Caco-2 (cell line): ENCODE measurements at regions of chr5 and their contacts with region 1.

Region 1: DNA sequence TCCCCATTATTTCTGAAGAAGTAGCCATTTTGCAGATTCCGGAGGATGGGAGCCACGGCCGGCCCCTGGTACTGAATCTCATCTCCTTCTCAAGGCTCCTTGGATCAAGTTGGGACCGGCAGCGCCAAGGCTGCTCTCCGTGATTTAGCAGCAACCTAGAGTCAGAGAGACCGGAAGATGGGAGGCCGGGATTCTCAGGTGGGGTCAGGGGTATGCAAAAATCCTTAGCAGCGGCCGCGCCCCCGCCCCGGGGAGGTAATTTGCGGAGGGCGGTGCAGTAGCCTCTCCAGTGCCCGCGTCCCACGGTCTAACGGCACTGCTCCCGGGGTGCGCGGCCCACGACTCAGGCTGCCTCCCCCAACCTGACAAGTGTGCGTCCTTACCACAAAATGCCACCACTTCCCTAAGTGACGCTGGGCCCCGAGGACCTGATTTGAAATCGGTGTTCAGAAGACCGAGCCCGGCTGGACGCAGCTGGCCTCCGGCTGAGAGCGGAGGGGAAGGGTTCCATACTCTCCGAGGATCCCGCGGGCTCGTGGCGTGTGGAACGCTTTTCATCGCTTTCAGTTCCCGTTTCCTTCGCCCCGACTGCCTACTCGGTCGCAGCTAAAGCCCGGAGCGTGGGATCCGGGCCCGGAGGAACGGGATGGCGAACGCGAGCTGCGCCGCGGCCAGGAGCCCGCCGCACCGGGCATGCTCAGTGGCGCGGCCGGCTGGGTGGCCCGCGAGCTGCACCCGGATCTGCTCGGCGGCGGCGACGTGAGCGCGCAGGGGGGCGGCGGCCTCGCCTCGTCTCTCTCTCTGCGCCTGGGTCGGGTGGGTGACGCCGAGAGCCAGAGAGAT is at the start of gene SCAMP1:
- DNase-seq: peak; percentile 90 to 97
- H3K4me3 ChIP-seq: peak within 1 kb of the TSS; percentile 72
- H3K4me3 Mint-ChIP-seq: peak within 1 kb of the TSS; percentile 97
- H3K27ac Mint-ChIP-seq: peak within 1 kb of the TSS; percentile 95
- H3K4me1 ChIP-seq: 0 out of 2 replicates have a peak, but pooled peaks cover 10% of the 10 kb centered on the region
- H3K4me1 Mint-ChIP-seq: peaks cover 6% of the 10 kb centered on the region
- H3K27me3 ChIP-seq: no peaks in the 10 kb centered on the region
- H3K27me3 Mint-ChIP-seq: no peaks in the 10 kb centered on the region
- CTCF ChIP-seq: peak in 1 of 2 experiments; percentile 15
- total RNA-seq, gene SCAMP1: 21.3 and 23.6 TPM in 2 replicates

Region 2: DNA sequence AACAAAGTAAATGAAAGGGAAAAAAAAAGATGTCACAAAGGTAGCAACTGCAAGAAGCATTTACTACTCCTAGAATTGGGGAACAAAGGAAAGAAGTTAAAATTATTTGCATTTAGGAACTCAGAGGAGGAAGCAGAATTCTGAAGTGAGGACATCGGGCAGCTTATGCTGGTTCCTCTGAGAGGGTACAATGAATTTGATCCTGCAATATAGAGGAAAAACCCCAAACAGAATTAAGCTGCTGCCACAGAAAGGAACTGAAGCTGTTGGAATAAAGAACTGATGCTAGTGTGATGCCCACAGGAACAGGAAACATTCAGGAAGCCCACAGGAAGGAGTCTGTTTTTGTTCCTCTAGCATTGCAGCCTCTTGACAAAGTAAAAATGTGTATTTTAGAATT is 561.6 kb before region 1 on chr5:
- CTCF ChIA-PET with region 1: no interaction called
- POLR2A ChIA-PET with region 1: no interaction called
- intact Hi-C with region 1: no loop called
- DNase-seq: no peak
- H3K4me3 ChIP-seq: no peak overlapping the region
- H3K4me3 Mint-ChIP-seq: no peak overlapping the region
- H3K27ac Mint-ChIP-seq: no peak overlapping the region
- H3K4me1 ChIP-seq: no peaks in the 10 kb centered on the region
- H3K4me1 Mint-ChIP-seq: no peaks in the 10 kb centered on the region
- H3K27me3 ChIP-seq: no peaks in the 10 kb centered on the region
- H3K27me3 Mint-ChIP-seq: peaks cover 6% of the 10 kb centered on the region
- CTCF ChIP-seq: no peak

Region 3: DNA sequence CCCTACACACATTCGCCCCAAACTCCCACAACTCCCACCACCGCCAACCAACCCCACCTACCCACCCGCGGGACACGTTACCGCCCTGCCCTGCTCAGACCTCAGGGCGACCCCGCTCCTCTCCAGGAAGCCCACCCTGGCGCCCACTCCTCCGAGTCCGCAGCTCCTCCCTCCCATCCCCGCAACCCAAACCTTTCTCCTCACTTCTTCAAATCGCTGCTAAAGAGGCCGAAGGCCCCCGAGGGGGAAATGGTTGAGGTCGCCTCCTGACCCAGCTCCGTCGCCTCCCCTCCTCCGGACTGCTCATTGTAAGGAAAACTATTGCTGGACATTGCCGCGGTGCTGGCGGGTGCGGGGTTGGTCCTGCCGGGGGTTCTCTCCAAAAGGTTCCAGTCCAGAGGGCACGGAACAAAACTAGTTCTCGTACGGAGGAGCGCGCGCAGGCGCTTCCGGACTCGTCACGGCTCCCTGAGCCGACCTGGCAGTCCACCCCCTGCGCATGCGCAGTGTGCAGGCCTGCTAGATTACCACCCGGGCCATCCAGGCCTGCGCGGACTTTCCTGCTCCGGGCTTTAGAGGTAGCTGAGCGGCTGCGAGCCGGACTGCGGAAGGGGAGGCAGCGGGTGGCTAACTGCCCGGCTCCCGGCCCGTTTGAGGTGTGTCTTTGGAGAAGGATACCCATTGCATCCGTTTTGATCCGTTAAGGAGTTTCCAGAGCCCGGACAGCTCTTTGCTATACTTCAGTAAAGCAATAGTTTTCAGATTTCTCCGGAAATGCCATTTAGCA is 65.6 kb before region 1 on chr5 and contains the start of gene AP3B1:
- CTCF ChIA-PET with region 1: interaction called, 13 read pairs
- POLR2A ChIA-PET with region 1: interaction called, 7 read pairs
- intact Hi-C with region 1: loop called (anchors 1 kb)
- DNase-seq: peak; percentile 98 to 99
- H3K4me3 ChIP-seq: peak within 1 kb of the TSS; percentile 74
- H3K4me3 Mint-ChIP-seq: peak within 1 kb of the TSS; percentile 84
- H3K27ac Mint-ChIP-seq: peak within 1 kb of the TSS; percentile 97
- H3K4me1 ChIP-seq: no peaks in the 10 kb centered on the region
- H3K4me1 Mint-ChIP-seq: peaks cover 6% of the 10 kb centered on the region
- H3K27me3 ChIP-seq: no peaks in the 10 kb centered on the region
- H3K27me3 Mint-ChIP-seq: no peaks in the 10 kb centered on the region
- CTCF ChIP-seq: no peak
- total RNA-seq, gene AP3B1: 52.7 and 53.1 TPM in 2 replicates

Region 4: DNA sequence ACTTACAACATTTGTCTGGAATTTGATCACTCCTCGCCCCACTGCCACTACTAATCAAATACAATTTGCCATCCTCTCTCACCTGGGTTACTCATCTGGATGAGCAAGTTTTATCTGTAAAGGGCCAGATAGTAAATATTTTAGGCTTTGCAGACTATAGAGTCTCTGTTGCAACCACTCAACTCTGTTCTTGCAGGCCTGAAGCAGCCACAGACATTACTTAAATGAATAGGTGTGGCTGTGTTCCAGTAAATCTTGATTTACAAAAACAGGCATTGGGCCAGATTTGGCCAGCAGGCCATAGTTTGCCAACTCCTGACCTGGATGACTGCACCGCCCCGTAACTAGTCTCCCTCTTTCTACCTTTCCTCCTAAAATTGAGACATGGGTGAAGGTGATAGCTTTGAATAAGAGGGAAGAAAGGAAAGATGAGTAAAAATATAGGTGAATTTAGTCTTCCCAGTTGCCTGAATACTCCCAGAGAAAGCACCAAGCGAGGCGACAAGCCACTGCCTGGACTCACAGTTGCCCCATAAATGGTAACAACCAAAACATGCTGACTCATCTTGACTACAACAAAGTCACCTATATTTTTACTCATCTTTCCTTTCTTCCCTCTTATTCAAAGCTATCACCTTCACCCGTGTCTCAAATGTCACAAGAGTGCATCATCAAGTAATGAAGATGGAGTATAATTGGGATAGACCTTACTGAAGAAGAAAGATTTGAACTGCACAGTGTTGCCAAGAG is 32.1 kb before region 1 on chr5:
- CTCF ChIA-PET with region 1: interaction called, 3 read pairs
- POLR2A ChIA-PET with region 1: no interaction called
- intact Hi-C with region 1: loop called (anchors 1 kb)
- DNase-seq: peak in 1 of 2 experiments; percentile 10
- H3K4me3 ChIP-seq: no peak overlapping the region
- H3K4me3 Mint-ChIP-seq: no peak overlapping the region
- H3K27ac Mint-ChIP-seq: no peak overlapping the region
- H3K4me1 ChIP-seq: peaks cover 9% of the 10 kb centered on the region; the same call in 1 of the 2 replicates
- H3K4me1 Mint-ChIP-seq: peaks cover 9% of the 10 kb centered on the region
- H3K27me3 ChIP-seq: no peaks in the 10 kb centered on the region
- H3K27me3 Mint-ChIP-seq: no peaks in the 10 kb centered on the region
- CTCF ChIP-seq: no peak

Region 5: DNA sequence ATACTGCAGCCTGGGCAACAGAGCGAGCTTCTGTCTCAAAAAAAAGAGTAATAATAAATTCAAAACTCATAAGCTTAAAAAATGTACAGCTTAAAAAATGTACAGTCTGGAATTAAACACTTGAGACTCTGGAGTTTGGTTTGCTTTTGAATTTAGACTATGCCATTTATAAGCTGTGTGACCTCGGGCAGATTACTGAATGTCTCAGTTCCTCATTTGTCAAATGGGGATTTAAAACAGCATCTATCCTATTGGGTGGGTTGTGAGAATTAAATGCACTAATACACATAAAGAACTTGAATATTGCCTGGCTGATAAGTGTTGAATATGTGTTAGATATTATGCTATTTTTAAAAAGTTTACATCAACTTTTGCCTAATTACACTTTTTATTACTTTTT is 98.8 kb after region 1 on chr5:
- CTCF ChIA-PET with region 1: no interaction called
- POLR2A ChIA-PET with region 1: no interaction called
- intact Hi-C with region 1: no loop called
- DNase-seq: no peak
- H3K4me3 ChIP-seq: no peak overlapping the region
- H3K4me3 Mint-ChIP-seq: no peak overlapping the region
- H3K27ac Mint-ChIP-seq: no peak overlapping the region
- H3K4me1 ChIP-seq: no peaks in the 10 kb centered on the region
- H3K4me1 Mint-ChIP-seq: no peaks in the 10 kb centered on the region
- H3K27me3 ChIP-seq: no peaks in the 10 kb centered on the region
- H3K27me3 Mint-ChIP-seq: no peaks in the 10 kb centered on the region
- CTCF ChIP-seq: no peak